WTC11 (cell line): ENCODE measurements at regions of chr1 and their contacts with region 1.

Region 1: DNA sequence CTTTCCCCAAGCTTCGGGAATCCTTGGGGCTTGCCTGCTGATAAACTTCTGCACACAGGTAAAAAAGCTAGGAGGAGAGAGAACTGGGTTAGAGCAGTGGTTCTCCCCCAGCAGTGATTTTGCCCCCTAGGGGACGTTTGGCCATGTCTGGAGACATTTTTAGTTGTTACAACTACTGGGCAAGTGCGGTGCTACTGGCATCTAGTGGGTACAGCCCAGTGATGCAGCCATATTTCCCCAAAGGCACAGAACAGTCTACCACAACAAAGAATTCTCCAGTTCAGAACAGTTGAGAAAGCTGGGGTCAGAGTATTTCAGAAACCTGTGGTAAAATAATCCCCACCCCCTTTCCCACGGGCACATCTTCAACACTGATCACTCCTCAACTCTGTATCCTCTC is 41.3 kb downstream of the LRRC71 start:
- DNase-seq: no peak
- ATAC-seq: peak; percentile 70
- H3K4me3 Mint-ChIP-seq: no peak overlapping the region
- H3K27ac Mint-ChIP-seq: no peak overlapping the region
- H3K4me1 Mint-ChIP-seq: no peaks in the 10 kb centered on the region
- H3K27me3 Mint-ChIP-seq: no peaks in the 10 kb centered on the region
- CTCF ChIP-seq: no peak

Region 2: DNA sequence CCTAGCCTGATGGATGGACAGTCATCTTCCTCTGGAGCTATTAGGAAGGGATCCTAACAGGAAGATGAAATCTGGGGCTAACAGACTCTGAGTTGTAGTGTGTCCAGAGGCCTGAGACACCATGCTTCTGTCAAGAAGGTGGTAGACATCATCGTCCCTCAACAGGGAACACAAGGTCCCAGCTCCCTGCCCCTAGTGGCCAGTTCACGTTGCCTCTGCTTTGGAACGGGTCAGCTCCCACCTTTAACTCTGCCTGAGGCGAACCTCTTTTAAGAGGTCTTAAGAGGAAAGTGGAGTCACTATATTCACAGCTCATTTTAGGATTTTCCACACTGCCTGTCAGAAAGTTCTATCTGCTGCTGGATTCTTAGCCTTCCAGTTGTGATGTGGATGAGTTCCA is 13.0 kb before region 1 on chr1:
- CTCF ChIA-PET with region 1: interaction called, 16 read pairs
- POLR2A ChIA-PET with region 1: no interaction called
- DNase-seq: peak; percentile 45
- ATAC-seq: peak; percentile 89
- H3K4me3 Mint-ChIP-seq: no peak overlapping the region
- H3K27ac Mint-ChIP-seq: no peak overlapping the region
- H3K4me1 Mint-ChIP-seq: no peaks in the 10 kb centered on the region
- H3K27me3 Mint-ChIP-seq: no peaks in the 10 kb centered on the region
- CTCF ChIP-seq: no peak